Sigmoid colon (tissue), 7 donors: ENCODE measurements at regions of chr20 and their contacts with region 1.

Region 1: GRCh38 chr20:9196084-9196483 is 127.2 kb downstream of the PLCB4 start:
- DNase-seq: no peak
- H3K4me3 ChIP-seq: no peak overlapping the region
- H3K27ac ChIP-seq: no peak overlapping the region
- H3K4me1 ChIP-seq: no peaks in the 10 kb centered on the region
- H3K27me3 ChIP-seq: no peaks in the 10 kb centered on the region
- CTCF ChIP-seq: no peak
- EP300 ChIP-seq: no peak
- POLR2A ChIP-seq: no peak

Region 2: GRCh38 chr20:9119776-9120175 is 76.3 kb before region 1 on chr20:
- intact Hi-C with region 1: loop called (anchors 10 kb)
- DNase-seq: peak; percentile 75
- H3K4me3 ChIP-seq: no peak overlapping the region
- H3K27ac ChIP-seq: peak overlapping the region in 2 of 4 donors; percentile 37 to 46
- H3K4me1 ChIP-seq: peaks cover 0 to 10% (median 3%) of the 10 kb centered on the region in 4 donors
- H3K27me3 ChIP-seq: no peaks in the 10 kb centered on the region
- CTCF ChIP-seq: no peak
- EP300 ChIP-seq: no peak
- POLR2A ChIP-seq: no peak

Region 3: GRCh38 chr20:9156529-9157280 is 39.4 kb before region 1 on chr20:
- intact Hi-C with region 1: no loop called
- DNase-seq: no peak
- H3K4me3 ChIP-seq: no peak overlapping the region
- H3K27ac ChIP-seq: no peak overlapping the region
- H3K4me1 ChIP-seq: peaks cover 0 to 15% (median 14%) of the 10 kb centered on the region in 4 donors
- H3K27me3 ChIP-seq: no peaks in the 10 kb centered on the region
- CTCF ChIP-seq: no peak
- EP300 ChIP-seq: no peak
- POLR2A ChIP-seq: no peak